Naive thymus-derived CD4-positive, alpha-beta T cell (primary cell): ENCODE measurements at regions of chr15 and their contacts with region 1.

Region 1: DNA sequence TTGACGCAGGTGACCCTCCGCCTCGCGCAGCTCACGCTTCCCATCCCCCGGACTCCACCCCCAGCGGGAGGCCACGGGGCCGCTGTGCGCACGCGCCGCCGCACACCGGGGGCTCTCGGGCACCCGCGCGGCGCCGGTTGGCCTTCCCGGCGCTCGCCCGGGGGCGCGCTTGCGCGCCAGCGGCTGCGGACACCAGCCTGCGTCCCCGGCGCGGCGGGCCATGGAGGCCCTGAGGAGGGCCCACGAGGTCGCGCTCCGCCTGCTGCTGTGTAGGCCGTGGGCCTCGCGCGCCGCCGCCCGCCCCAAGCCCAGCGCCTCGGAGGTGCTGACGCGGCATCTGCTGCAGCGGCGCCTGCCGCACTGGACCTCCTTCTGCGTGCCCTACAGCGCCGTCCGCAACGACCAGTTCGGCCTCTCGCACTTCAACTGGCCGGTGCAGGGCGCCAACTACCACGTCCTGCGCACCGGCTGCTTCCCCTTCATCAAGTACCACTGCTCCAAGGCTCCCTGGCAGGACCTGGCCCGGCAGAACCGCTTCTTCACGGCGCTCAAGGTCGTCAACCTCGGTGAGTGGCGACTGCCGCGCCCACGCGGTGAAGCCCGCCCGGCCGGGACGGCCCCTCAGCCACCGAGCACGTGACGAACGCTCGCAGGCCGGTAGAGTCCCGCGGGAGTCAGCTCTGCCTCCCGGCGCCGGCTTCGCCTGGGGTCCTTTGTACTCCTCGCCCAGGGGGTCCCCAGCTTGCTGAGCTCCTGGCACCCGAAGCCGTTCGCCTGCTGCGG is at the start of gene C15orf61:
- DNase-seq: peak; percentile 78 to 92 (median 82)
- ATAC-seq: peak; percentile 90
- H3K4me3 ChIP-seq: peak within 1 kb of the TSS; percentile 87
- H3K4me3 Mint-ChIP-seq: peak within 1 kb of the TSS; percentile 85 to 98 (median 95)
- H3K27ac ChIP-seq: peak within 1 kb of the TSS; percentile 85
- H3K27ac Mint-ChIP-seq: peak within 1 kb of the TSS; percentile 88 to 96 (median 94)
- H3K4me1 ChIP-seq: peaks cover 16 to 28% of the 10 kb centered on the region in 2 donors
- H3K4me1 Mint-ChIP-seq: peaks cover 20 to 40% (median 34%) of the 10 kb centered on the region in 7 donors
- H3K27me3 ChIP-seq: no peaks in the 10 kb centered on the region
- H3K27me3 Mint-ChIP-seq: no peaks in the 10 kb centered on the region
- total RNA-seq, gene C15orf61: 4.3 to 11.0 (median 8.2) TPM

Region 2: GRCh38 chr15:67290319-67290718 is 230.9 kb before region 1 on chr15:
- CTCF ChIA-PET with region 1: no interaction called
- POLR2A ChIA-PET with region 1: no interaction called
- intact Hi-C with region 1: no loop called
- DNase-seq: no peak
- ATAC-seq: no peak
- H3K4me3 ChIP-seq: no peak overlapping the region
- H3K4me3 Mint-ChIP-seq: no peak overlapping the region
- H3K27ac ChIP-seq: no peak overlapping the region
- H3K27ac Mint-ChIP-seq: no peak overlapping the region
- H3K4me1 ChIP-seq: no peaks in the 10 kb centered on the region
- H3K4me1 Mint-ChIP-seq: no peaks in the 10 kb centered on the region
- H3K27me3 ChIP-seq: no peaks in the 10 kb centered on the region
- H3K27me3 Mint-ChIP-seq: peaks cover 0 to 5% (median 3%) of the 10 kb centered on the region in 5 donors

Region 3: GRCh38 chr15:67465196-67465952 is 55.8 kb before region 1 on chr15:
- CTCF ChIA-PET with region 1: no interaction called
- POLR2A ChIA-PET with region 1: no interaction called
- intact Hi-C with region 1: no loop called
- DNase-seq: no peak
- ATAC-seq: no peak
- H3K4me3 ChIP-seq: no peak overlapping the region
- H3K4me3 Mint-ChIP-seq: no peak overlapping the region
- H3K27ac ChIP-seq: no peak overlapping the region
- H3K27ac Mint-ChIP-seq: no peak overlapping the region
- H3K4me1 ChIP-seq: no peaks in the 10 kb centered on the region
- H3K4me1 Mint-ChIP-seq: peaks cover 0 to 2% (median 0%) of the 10 kb centered on the region in 7 donors
- H3K27me3 ChIP-seq: no peaks in the 10 kb centered on the region
- H3K27me3 Mint-ChIP-seq: peaks cover 0 to 6% (median 0%) of the 10 kb centered on the region in 5 donors

Region 4: DNA sequence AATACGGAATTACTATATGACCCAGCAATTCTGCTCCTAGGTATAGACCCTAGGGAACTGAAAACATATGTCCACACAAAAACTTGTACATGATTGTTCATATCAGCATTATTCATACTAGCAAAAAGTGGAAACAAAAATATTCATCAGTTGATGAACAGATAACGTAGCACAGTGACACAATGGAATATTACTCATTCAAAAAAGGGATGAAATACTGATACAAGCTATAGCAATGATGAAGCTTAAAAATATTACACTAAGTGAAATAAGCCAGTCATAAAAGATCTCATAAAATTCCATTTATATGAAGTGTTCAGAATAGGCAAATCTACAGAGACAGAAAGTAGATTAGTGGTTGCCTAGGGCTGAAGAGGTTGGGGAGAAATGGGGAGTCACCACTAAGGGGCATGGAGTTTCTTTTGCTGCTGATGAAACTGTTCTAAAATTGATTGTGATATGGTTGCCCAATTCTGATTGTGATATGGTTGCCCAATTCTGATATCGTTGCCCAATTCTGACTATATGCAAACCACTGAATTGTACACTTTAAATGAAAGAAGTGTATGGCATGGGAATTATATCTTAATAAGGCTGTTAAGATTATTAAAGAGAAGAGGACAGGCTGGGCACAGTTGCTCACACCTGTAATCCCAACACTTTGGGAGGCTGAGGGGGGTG is 10.3 kb after region 1 on chr15:
- CTCF ChIA-PET with region 1: interaction called, 4 read pairs
- POLR2A ChIA-PET with region 1: interaction called, 16 read pairs
- intact Hi-C with region 1: no loop called
- DNase-seq: no peak
- ATAC-seq: no peak
- H3K4me3 ChIP-seq: no peak overlapping the region
- H3K4me3 Mint-ChIP-seq: no peak overlapping the region
- H3K27ac ChIP-seq: no peak overlapping the region
- H3K27ac Mint-ChIP-seq: no peak overlapping the region
- H3K4me1 ChIP-seq: no peaks in the 10 kb centered on the region
- H3K4me1 Mint-ChIP-seq: peaks cover 0 to 3% (median 0%) of the 10 kb centered on the region in 7 donors
- H3K27me3 ChIP-seq: no peaks in the 10 kb centered on the region
- H3K27me3 Mint-ChIP-seq: peaks cover 0 to 8% (median 0%) of the 10 kb centered on the region in 5 donors

Region 5: DNA sequence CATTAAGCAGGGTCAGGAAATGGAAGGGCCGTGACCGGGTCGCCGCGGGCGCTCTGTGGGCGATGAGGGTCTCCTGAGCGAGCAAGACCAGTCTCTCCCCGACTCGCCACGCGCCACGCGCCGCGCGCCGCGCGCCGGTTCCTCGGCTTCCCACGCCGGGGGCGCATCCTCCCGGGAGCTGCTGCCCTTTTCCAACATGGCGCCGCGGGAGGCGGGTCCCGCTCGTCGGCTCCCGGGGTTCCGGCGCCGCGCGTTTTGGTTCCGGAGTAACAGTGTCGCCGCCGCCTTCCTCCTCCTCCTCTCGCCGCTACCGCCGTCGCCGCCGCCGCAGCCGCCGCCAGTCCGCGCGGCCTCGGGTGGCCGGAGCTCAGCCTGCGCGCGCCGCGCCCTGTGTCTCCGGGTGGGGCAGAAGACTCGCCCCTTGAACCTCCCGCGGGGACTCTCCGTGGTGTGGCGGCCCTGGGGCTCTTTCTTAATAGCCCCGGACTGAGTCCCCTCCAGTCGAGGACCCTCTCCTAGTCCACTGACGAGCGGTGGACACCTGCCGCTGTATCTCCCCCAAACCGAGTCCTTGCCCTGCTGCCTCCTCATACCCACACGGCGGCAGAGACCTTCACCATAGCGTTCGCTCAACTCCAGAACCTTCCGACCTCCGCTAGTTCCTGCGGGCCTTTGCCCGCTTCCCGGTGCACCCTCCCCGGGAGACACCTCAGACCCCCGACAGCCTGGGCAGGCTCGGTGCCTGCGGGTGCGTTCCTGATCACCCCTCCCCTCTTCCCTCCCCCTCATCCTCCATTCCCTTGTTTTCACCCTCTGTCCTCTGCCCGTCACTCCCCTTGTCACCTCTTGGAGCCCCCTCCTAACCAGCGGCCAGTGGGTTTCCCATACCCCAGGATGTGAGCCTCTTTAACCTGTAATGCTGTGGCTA is 21.5 kb after region 1 on chr15 and contains the start of gene MAP2K5:
- CTCF ChIA-PET with region 1: interaction called, 3 read pairs
- POLR2A ChIA-PET with region 1: interaction called, 43 read pairs
- intact Hi-C with region 1: loop called (anchors 1 kb)
- DNase-seq: peak; percentile 75 to 87 (median 78)
- ATAC-seq: peak; percentile 89
- H3K4me3 ChIP-seq: peak within 1 kb of the TSS; percentile 90
- H3K4me3 Mint-ChIP-seq: peak within 1 kb of the TSS; percentile 92 to 98 (median 98)
- H3K27ac ChIP-seq: peak within 1 kb of the TSS; percentile 78
- H3K27ac Mint-ChIP-seq: peak within 1 kb of the TSS; percentile 97 to 100 (median 99)
- H3K4me1 ChIP-seq: peaks cover 7 to 22% of the 10 kb centered on the region in 2 donors
- H3K4me1 Mint-ChIP-seq: peaks cover 20 to 68% (median 56%) of the 10 kb centered on the region in 7 donors
- H3K27me3 ChIP-seq: no peaks in the 10 kb centered on the region
- H3K27me3 Mint-ChIP-seq: no peaks in the 10 kb centered on the region
- total RNA-seq, gene MAP2K5: 23.4 to 43.4 (median 35.7) TPM

Region 6: GRCh38 chr15:67850995-67851571 is 329.9 kb after region 1 on chr15:
- CTCF ChIA-PET with region 1: no interaction called
- POLR2A ChIA-PET with region 1: no interaction called
- intact Hi-C with region 1: no loop called
- DNase-seq: no peak
- ATAC-seq: peak; percentile 76
- H3K4me3 ChIP-seq: no peak overlapping the region
- H3K4me3 Mint-ChIP-seq: no peak overlapping the region
- H3K27ac ChIP-seq: no peak overlapping the region
- H3K27ac Mint-ChIP-seq: no peak overlapping the region
- H3K4me1 ChIP-seq: no peaks in the 10 kb centered on the region
- H3K4me1 Mint-ChIP-seq: peaks cover 0 to 4% (median 0%) of the 10 kb centered on the region in 7 donors
- H3K27me3 ChIP-seq: peaks cover 0 to 3% of the 10 kb centered on the region in 2 donors
- H3K27me3 Mint-ChIP-seq: peaks cover 0 to 22% (median 14%) of the 10 kb centered on the region in 5 donors